Right ventricle myocardium inferior (tissue), 1 donor: ENCODE measurements at regions of chr14 and their contacts with region 1.

Region 1: GRCh38 chr14:36171607-36172006 is 4.9 kb downstream of the PTCSC3 start:
- DNase-seq: no peak
- ATAC-seq: no peak

Region 2: GRCh38 chr14:36129181-36129580 is 42.4 kb before region 1 on chr14:
- intact Hi-C with region 1: no loop called
- DNase-seq: no peak
- ATAC-seq: no peak

Region 3: GRCh38 chr14:36151335-36151734 is 20.3 kb before region 1 on chr14:
- intact Hi-C with region 1: loop called (anchors 1 kb)
- DNase-seq: no peak
- ATAC-seq: no peak

Region 4: DNA sequence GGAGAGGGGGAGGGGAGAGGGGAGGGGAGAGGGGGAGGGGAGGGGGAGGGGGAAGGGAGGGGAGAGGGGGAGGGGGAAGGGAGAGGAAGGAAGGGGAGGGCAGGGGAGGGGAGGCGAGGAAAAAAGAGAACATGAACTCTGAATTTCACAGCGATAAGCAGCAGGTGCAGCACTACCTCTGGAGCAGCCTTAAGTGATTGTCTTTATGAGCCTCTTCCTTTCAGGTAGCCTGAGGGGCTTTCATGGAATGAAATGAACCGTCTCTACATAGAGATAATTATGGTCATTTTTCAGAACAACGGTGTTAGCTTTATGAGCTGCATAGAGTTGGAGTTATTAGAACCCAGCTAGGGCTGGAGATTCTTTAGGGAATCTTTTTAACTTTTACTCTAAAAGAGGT is 23.1 kb after region 1 on chr14:
- intact Hi-C with region 1: no loop called
- DNase-seq: no peak
- ATAC-seq: no peak